ENCODE measurements at regions of chr2 and their contacts with region 1.

Region 1: GRCh38 chr2:46481198-46482193 is 2.1 kb downstream of the TMEM247 start:
- DNase-seq: peak; percentile 91
- H3K4me3 ChIP-seq: no peak overlapping the region
- H3K27ac ChIP-seq: peak overlapping the region; percentile 58
- H3K4me1 ChIP-seq: peaks cover 17% of the 10 kb centered on the region
- H3K27me3 ChIP-seq: no peaks in the 10 kb centered on the region
- CTCF ChIP-seq: no peak
- POLR2A ChIP-seq: no peak

Region 2: DNA sequence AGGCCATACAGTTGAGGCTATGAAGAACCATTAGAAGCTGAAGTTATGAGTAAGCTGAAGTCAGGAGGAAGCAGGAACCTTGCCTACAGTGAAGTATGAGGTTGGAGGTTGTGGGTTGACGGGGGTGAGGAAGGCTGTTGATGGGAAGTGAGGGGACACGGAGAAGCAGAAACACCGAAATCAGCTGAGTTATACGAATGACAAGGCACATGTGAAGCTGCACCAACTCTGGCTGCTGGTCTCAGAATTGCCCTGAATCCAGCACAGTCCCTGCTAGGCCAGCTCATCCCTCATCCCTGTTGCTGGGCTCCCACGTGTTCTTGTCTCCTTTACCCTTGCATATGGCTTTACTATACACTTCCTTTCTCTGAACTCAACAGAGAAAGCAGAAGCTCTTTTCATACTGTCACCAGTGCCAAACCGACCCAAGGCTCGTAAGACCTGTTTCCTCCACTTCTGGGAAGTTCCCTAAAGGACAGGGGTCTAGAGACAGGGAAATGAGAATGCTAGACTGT is 11.3 kb before region 1 on chr2:
- CTCF ChIA-PET with region 1: interaction called, 14 read pairs
- POLR2A ChIA-PET with region 1: no interaction called
- dilution Hi-C with region 1: no loop called
- intact Hi-C with region 1: no loop called
- DNase-seq: no peak
- H3K4me3 ChIP-seq: no peak overlapping the region
- H3K27ac ChIP-seq: no peak overlapping the region
- H3K4me1 ChIP-seq: no peaks in the 10 kb centered on the region
- H3K27me3 ChIP-seq: peaks cover 0 to 3% of the 10 kb centered on the region in 2 experiments
- CTCF ChIP-seq: no peak
- POLR2A ChIP-seq: no peak

Region 3: DNA sequence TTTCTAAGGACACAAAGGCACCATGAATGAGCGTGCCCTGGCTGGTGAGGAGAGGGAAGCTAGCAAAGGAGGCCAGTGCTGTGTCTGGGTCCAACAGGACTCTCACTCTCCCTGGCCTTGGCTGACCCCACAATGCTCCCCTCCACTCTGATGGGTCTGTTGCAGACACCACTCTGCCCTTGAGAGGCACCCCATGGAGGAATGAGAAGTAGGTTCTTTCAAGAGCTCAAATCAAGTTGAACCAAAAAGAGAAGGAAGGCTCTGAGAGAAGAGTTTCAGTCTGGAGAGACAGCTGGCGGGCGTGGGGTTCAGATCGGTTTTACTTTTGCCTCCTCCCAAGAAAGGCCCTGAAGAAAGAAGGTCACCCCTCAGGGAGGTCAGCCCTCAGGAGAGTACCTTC is 16.3 kb after region 1 on chr2:
- CTCF ChIA-PET with region 1: interaction called, 10 read pairs
- POLR2A ChIA-PET with region 1: no interaction called
- dilution Hi-C with region 1: no loop called
- intact Hi-C with region 1: no loop called
- DNase-seq: no peak
- H3K4me3 ChIP-seq: no peak overlapping the region
- H3K27ac ChIP-seq: no peak overlapping the region
- H3K4me1 ChIP-seq: peaks cover 9% of the 10 kb centered on the region
- H3K27me3 ChIP-seq: no peaks in the 10 kb centered on the region
- CTCF ChIP-seq: no peak
- POLR2A ChIP-seq: no peak

Region 4: DNA sequence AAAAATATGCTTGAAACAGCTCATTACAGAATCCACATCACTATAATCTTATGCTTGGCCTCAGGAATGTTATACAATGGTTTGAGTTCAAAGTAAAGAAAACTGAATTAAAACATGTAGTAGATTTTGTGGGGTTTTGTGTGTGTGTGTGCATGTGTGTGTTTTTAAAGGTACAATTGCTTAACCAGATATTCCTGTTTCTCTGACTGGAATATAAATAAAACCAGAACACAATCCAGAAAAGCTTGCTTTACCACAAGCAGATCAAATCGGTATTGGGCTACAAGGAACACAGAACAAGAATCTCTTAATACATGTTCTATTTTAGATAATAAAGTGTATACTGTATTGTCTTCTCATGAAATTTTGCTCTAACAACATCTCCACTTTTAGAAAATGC is 107.9 kb after region 1 on chr2:
- CTCF ChIA-PET with region 1: no interaction called
- POLR2A ChIA-PET with region 1: no interaction called
- dilution Hi-C with region 1: no loop called
- intact Hi-C with region 1: loop called (anchors 5 kb)
- DNase-seq: no peak
- H3K4me3 ChIP-seq: no peak overlapping the region
- H3K27ac ChIP-seq: no peak overlapping the region
- H3K4me1 ChIP-seq: no peaks in the 10 kb centered on the region
- H3K27me3 ChIP-seq: no peaks in the 10 kb centered on the region
- CTCF ChIP-seq: no peak
- POLR2A ChIP-seq: no peak

Region 5: DNA sequence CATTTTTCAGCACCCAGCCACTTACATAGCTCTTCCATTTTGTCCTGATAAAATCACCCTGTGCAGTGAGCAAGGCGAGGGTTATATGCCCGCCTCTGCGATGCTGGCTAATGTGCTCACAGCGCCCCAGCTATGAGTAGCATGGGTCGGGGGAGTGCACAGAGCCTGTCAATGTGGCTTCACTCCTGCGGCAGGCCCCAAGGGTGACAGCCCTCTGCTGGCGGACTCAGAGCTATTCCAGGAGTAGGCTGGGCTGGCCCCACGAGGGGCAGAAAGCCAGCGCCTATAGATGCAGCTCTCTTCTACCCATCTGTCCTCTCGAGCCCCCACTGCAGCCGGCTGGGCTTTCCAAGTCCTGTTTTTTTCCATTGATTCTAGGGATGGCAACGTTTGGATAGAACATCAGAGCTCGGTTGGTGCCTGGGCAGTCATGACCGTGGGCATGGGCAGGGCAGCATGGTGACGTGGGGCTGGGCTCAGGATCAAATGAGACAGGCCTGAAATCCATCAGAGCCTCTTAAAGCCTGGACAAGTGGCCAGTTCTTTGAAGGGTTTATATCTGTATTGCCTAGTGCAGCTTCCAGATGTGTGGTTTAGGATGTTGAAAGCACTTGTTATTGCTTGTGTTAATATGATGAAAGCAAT is 299.4 kb after region 1 on chr2:
- CTCF ChIA-PET with region 1: no interaction called
- POLR2A ChIA-PET with region 1: no interaction called
- dilution Hi-C with region 1: no loop called
- intact Hi-C with region 1: no loop called
- DNase-seq: no peak
- H3K4me3 ChIP-seq: no peak overlapping the region
- H3K27ac ChIP-seq: no peak overlapping the region
- H3K4me1 ChIP-seq: no peaks in the 10 kb centered on the region
- H3K27me3 ChIP-seq: no peaks in the 10 kb centered on the region
- CTCF ChIP-seq: peak in 1 of 2 donors; percentile 15
- POLR2A ChIP-seq: no peak

Measured in endothelial cell of umbilical vein (primary cell).